GM10248 (cell line): ENCODE measurements at regions of chr3 and their contacts with region 1.

Region 1: DNA sequence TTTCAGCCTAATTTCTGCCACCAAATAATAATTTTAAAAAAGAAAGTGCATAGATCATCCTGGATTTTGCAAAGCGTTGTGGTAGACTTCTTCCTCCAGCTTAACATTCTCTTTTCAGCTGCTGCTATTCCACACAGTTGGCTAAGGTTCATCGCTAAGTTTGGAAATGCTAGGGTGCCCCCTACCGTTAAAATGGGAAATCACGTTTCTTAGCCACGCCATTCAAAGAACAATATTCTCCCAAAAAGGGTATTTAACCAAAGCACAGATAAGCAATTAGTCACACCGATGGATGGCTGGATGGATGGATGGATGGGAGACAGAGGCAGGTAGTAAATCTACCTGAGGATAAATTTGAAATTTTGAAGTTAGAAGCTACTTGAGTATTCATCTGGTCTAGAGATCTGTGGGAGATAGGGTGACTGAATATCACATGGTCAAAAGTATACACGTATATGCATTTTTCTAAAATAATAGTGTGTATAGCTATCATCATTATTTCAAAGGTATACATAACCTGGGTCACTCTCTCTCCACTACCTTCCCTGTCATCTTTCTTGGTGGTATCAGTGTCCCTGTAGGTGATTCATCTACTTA is 67.2 kb downstream of the EFHB start:
- DNase-seq: peak; percentile 45
- CTCF ChIP-seq: peak; percentile 79

Region 2: GRCh38 chr3:19877656-19878055 is 10.8 kb after region 1 on chr3:
- CTCF ChIA-PET with region 1: interaction called, 29 read pairs
- POLR2A ChIA-PET with region 1: no interaction called
- DNase-seq: no peak
- CTCF ChIP-seq: no peak

Region 3: DNA sequence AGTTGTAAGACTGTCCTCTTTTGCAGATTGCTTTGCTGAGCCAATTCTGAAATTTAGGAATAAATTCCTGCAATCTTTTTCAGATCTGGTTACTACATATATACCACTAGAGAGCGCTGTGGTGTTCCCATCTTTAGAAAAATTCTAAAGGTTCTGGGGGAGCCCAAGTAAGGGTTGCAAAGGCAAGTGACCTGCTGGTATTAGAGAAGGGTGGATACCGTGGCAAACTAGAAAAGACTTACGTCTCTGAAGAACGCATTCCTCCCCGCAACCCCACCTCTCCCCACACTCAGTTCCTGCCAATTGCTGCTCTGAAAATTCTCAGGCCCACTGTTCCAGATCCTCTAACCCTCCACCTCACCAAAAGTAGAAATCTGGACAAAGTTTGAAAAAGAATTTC is 18.6 kb after region 1 on chr3:
- CTCF ChIA-PET with region 1: interaction called, 14 read pairs
- POLR2A ChIA-PET with region 1: no interaction called
- DNase-seq: peak; percentile 50
- CTCF ChIP-seq: peak; percentile 40

Region 4: GRCh38 chr3:20008646-20009045 is 141.8 kb after region 1 on chr3:
- CTCF ChIA-PET with region 1: no interaction called
- POLR2A ChIA-PET with region 1: no interaction called
- DNase-seq: no peak
- CTCF ChIP-seq: no peak

Region 5: DNA sequence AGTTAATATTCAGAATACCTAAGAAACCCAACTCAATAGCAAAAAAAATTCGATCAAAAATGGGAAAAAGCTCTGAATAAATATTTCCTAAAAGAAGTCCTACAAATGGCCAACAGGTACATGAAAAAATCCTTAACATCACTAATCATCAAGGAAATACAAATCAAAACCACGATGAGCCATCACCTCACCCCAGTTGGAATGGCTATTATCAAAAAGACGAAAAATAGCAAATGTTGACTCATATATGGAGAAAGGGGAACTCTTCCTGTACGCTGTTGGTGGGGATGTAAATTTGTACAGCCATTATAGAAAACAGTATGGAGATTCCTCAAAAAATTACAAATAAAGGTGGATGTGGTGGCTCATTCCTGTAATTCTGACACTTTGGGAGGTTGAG is 348.8 kb after region 1 on chr3:
- CTCF ChIA-PET with region 1: no interaction called
- POLR2A ChIA-PET with region 1: no interaction called
- DNase-seq: no peak
- CTCF ChIP-seq: no peak